Gastrocnemius medialis (tissue), 4 donors: ENCODE measurements at regions of chr14 and their contacts with region 1.

Region 1: DNA sequence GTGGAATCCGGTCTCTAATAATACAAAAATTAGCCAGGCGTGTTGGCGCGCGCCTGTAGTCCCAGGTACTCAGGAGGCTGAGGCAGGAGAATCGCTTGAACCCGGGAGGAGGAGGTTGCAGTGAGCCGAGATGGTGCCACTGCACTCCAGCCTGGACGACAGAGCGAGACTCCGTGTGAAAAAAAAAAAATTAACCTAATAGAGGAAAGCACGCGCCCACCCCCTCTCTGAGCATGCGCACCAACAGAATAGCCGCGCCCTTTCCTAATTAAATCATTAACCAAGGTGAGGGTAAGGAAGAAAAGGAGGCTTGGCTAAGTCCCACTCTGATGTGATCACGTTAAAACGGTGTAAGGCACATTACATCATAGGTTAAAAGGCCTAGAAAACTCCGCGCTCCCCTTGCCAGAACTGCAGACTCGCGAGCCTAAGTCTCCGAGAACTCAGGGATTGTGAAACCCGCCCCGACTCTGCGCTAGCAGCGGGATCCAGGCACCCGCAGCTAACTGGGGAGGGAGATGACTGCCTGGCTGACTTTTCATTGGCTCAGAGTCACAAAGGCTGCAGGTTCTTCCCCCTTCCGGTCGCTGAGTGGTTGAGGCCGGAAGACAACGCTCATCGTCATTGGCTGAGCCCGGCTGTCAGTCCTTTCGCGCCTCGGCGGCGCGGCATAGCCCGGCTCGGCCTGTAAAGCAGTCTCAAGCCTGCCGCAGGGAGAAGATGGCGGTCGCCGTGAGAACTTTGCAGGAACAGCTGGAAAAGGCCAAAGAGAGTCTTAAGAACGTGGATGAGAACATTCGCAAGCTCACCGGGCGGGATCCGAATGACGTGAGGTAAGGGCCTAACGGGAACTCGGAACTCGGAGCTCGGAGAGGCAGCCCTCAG is at the start of gene PNN:
- DNase-seq: peak; percentile 98 to 99
- ATAC-seq: peak; percentile 94 to 97
- H3K4me3 ChIP-seq: peak within 1 kb of the TSS; percentile 71 to 96 (median 88)
- H3K27ac ChIP-seq: peak within 1 kb of the TSS; percentile 90 to 95 (median 93)
- H3K4me1 ChIP-seq: peaks cover 18 to 21% of the 10 kb centered on the region in 2 donors
- H3K27me3 ChIP-seq: no peaks in the 10 kb centered on the region
- CTCF ChIP-seq: no peak
- POLR2A ChIP-seq: peak; percentile 92 to 94
- total RNA-seq, gene PNN: 9.2 to 16.2 (median 13.7) TPM

Region 2: DNA sequence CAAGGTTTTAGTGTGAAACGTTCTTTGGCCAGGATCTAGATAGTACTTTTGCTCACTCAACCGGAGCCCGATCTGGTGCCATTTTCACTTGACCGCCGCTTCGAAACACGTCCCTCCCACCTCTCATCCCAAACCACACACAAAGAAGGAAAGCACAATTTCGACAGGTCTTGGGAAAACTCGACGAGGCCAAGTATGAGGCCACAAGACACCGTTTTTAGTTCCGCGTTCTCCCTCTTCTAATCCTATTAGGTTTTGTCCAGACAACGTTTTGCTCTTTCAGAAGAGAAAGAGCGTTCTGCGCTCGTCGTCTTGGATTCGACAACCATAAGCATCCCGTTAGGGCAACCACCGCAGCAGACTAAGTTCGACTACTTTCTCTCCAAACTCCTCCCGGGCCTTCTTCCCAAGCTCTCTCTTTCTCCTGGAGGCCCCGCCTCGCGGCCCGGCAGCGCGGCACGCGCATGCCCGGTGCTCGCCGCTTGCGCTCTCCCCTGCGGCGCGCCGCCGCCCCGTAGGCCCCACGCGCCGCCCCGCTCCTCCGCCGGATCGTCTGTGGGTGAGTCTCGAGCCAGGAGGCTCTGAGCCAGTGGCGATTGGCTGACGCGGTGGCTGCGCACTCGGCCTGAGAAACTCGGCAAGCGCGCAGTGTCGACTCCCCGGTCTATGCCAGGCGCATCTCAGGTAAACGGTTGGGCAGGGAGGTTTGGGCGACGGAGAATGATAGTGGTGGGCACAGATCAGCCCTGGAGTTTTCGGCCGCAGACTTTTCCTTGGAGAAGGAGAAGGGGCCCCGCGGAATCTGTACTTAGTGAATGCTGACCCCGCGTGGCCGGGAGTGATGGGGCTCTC is 1977.2 kb before region 1 on chr14 and contains the start of gene MIPOL1:
- in situ Hi-C with region 1: no loop called
- intact Hi-C with region 1: loop called (anchors 5 kb)
- DNase-seq: peak; percentile 59 to 81
- ATAC-seq: peak; percentile 93
- H3K4me3 ChIP-seq: peak within 1 kb of the TSS; percentile 70 to 89 (median 73)
- H3K27ac ChIP-seq: peak within 1 kb of the TSS; percentile 84 to 93 (median 88)
- H3K4me1 ChIP-seq: peaks cover 8 to 10% of the 10 kb centered on the region in 2 donors
- H3K27me3 ChIP-seq: no peaks in the 10 kb centered on the region
- CTCF ChIP-seq: peak in 4 of 5 experiments; percentile 9 to 44 (median 22)
- POLR2A ChIP-seq: peak; percentile 39 to 42
- total RNA-seq, gene MIPOL1: 3.1 to 13.7 (median 4.1) TPM

Region 3: GRCh38 chr14:39114073-39114838 is 60.5 kb before region 1 on chr14 and contains the start of gene GEMIN2:
- in situ Hi-C with region 1: loop called in 2 of 4 experiments (anchors 5 to 10 kb)
- intact Hi-C with region 1: loop called (anchors 2 kb)
- DNase-seq: peak; percentile 84 to 92
- ATAC-seq: peak; percentile 100
- H3K4me3 ChIP-seq: peak within 1 kb of the TSS; percentile 71 to 93 (median 76)
- H3K27ac ChIP-seq: peak within 1 kb of the TSS; percentile 76 to 81 (median 78)
- H3K4me1 ChIP-seq: peaks cover 11 to 13% of the 10 kb centered on the region in 2 donors
- H3K27me3 ChIP-seq: no peaks in the 10 kb centered on the region
- CTCF ChIP-seq: no peak
- POLR2A ChIP-seq: peak in 1 of 2 donors; percentile 27
- total RNA-seq, gene GEMIN2: 17.7 to 28.0 (median 22.7) TPM

Region 4: DNA sequence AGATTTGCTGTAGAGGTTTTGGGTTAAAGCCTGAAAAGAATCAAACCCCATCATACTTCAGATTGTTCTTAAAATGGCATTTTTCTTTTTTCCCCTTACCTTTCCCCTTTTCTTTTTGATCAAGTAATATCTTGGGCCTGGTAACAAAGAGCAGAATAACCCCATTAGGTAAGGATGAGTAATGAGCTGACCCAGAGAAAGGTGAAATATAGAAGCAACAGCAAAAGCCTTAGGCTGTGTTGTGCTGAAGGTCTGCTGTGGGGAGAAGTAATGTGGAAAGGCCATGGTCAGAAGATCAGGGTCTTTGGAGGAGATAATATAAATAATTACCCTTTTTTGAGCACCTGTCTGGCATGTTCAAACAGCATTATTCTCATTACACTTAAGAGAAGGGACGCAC is 101.2 kb after region 1 on chr14:
- in situ Hi-C with region 1: loop called in 1 of 4 experiments (anchors 10 kb)
- intact Hi-C with region 1: no loop called
- DNase-seq: no peak
- ATAC-seq: peak in 1 of 2 donors; percentile 79
- H3K4me3 ChIP-seq: no peak overlapping the region
- H3K27ac ChIP-seq: peak overlapping the region; percentile 13 to 64 (median 42)
- H3K4me1 ChIP-seq: peaks cover 25 to 31% of the 10 kb centered on the region in 2 donors
- H3K27me3 ChIP-seq: no peaks in the 10 kb centered on the region
- CTCF ChIP-seq: no peak
- POLR2A ChIP-seq: no peak

Region 5: GRCh38 chr14:39426605-39427004 is 251.8 kb after region 1 on chr14:
- in situ Hi-C with region 1: loop called in 2 of 4 experiments (anchors 10 kb)
- intact Hi-C with region 1: loop called (anchors 1 kb)
- DNase-seq: no peak
- ATAC-seq: peak; percentile 23 to 49
- H3K4me3 ChIP-seq: no peak overlapping the region
- H3K27ac ChIP-seq: peak overlapping the region in 1 of 4 donors; percentile 32
- H3K4me1 ChIP-seq: peaks cover 43% of the 10 kb centered on the region in 2 donors
- H3K27me3 ChIP-seq: no peaks in the 10 kb centered on the region
- CTCF ChIP-seq: peak in 1 of 5 experiments; percentile 6
- POLR2A ChIP-seq: no peak